A549 (cell line): ENCODE measurements at regions of chr15 and their contacts with region 1.

Region 1: DNA sequence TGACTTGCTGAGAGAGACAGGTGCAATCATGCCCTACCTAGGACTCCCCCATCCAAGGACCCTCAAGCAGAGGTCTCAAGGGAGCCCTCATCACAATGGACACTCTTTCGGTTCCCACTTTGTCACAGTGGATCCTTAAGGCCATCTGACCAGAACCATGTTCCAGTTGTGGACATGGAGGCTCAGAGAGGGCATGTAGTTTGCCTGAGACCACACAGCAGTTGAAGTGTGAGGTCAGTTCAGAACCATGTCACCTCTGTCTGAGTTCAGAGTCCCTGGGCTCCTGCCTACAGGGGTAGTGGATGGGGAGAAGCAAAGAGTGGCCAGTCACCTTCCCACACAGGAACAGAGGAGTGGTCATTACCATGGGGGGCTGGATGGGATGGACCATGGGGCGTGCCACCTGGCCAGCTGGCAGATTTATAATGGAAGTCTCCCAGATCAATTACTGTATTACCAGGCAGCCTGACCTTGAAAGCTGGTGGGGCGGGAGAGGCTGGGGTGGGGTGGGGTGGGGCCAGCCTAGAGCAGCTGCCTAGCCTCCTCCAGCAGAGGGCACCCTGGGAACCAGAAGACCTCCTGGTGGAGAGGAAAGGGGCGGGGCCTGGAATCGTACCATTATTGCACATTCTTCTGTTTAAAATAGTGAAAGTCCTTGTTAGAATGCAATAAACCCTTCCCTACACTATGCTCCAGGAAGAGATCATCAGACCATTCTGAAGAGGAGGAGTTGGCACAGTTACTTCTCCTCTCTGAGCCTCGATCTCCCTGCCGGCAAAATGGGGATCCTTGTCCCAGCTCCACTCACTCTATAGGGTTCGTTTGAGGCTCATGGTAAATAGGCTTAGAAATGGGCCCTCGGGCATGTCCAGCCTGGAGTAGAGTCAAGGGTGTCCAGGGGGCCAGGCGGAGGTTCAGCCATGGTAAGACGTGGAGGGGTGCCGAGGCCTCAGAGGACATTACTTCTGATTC is 26.9 kb upstream of the LINGO1 start:
- DNase-seq: peak; percentile 67 to 91
- ATAC-seq: peak; percentile 46 to 85; a peak in 5 of 6 replicates
- H3K4me3 ChIP-seq: 0 out of 3 replicates have a peak overlapping the region, but pooled peaks have one; percentile 17
- H3K27ac ChIP-seq: no peak overlapping the region
- H3K4me1 ChIP-seq: no peaks in the 10 kb centered on the region
- CTCF ChIP-seq: peak; percentile 73
- EP300 ChIP-seq: no peak
- POLR2A ChIP-seq: no peak
- RAD21 ChIP-seq: peak; percentile 48 to 63; a peak in 4 of 5 replicates

Region 2: GRCh38 chr15:77642793-77643430 is 16.7 kb before region 1 on chr15:
- CTCF ChIA-PET with region 1: interaction called, 181 read pairs
- POLR2A ChIA-PET with region 1: interaction called, 3 read pairs
- DNase-seq: peak in 1 of 2 experiments; percentile 30
- ATAC-seq: peak; percentile 36 to 71; a peak in 4 of 6 replicates
- H3K4me3 ChIP-seq: no peak overlapping the region
- H3K27ac ChIP-seq: no peak overlapping the region
- H3K4me1 ChIP-seq: no peaks in the 10 kb centered on the region
- CTCF ChIP-seq: no peak
- EP300 ChIP-seq: no peak
- POLR2A ChIP-seq: no peak
- RAD21 ChIP-seq: no peak

Region 3: GRCh38 chr15:77671363-77671986 is 11.8 kb after region 1 on chr15:
- CTCF ChIA-PET with region 1: interaction called, 14 read pairs
- POLR2A ChIA-PET with region 1: no interaction called
- DNase-seq: no peak
- ATAC-seq: no peak
- H3K4me3 ChIP-seq: no peak overlapping the region
- H3K27ac ChIP-seq: no peak overlapping the region
- H3K4me1 ChIP-seq: no peaks in the 10 kb centered on the region
- CTCF ChIP-seq: no peak
- EP300 ChIP-seq: no peak
- POLR2A ChIP-seq: no peak
- RAD21 ChIP-seq: no peak